Left ventricle myocardium inferior (tissue), 1 donor: ENCODE measurements at regions of chr1 and their contacts with region 1.

Region 1: GRCh38 chr1:64268653-64269557 is 65.5 kb downstream of the UBE2U start:
- DNase-seq: peak; percentile 31
- H3K4me3 ChIP-seq: no peak overlapping the region
- H3K27ac ChIP-seq: no peak overlapping the region
- H3K4me1 ChIP-seq: no peaks in the 10 kb centered on the region
- H3K27me3 ChIP-seq: peaks cover 4% of the 10 kb centered on the region
- CTCF ChIP-seq: peak; percentile 83

Region 2: DNA sequence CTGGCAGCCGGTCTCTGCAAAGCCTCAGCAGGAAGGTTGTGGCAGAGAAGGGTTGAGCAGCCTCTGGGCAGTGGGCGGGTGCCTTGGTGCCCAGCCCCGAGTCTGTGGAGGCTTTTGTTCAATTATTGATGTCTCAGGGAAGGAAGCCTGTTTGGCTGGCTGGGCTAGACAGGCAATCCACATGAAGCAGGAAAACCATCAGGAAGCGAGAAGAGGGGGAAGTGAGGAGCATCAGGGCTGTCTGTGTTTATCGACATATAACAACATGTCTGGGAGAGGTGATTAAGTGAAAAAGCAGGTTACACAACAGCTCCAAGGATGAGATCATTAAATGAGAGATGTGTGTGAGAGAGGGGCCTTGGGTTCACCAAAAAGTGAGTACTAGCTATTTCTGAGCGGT is 40.0 kb after region 1 on chr1:
- intact Hi-C with region 1: no loop called
- DNase-seq: no peak
- H3K4me3 ChIP-seq: no peak overlapping the region
- H3K27ac ChIP-seq: no peak overlapping the region
- H3K4me1 ChIP-seq: no peaks in the 10 kb centered on the region
- H3K27me3 ChIP-seq: no peaks in the 10 kb centered on the region
- CTCF ChIP-seq: no peak

Region 3: GRCh38 chr1:64487061-64487460 is 218.2 kb after region 1 on chr1:
- intact Hi-C with region 1: loop called (anchors 10 kb)
- DNase-seq: no peak
- H3K4me3 ChIP-seq: no peak overlapping the region
- H3K27ac ChIP-seq: no peak overlapping the region
- H3K4me1 ChIP-seq: peaks cover 11% of the 10 kb centered on the region
- H3K27me3 ChIP-seq: no peaks in the 10 kb centered on the region
- CTCF ChIP-seq: peak; percentile 48

Region 4: DNA sequence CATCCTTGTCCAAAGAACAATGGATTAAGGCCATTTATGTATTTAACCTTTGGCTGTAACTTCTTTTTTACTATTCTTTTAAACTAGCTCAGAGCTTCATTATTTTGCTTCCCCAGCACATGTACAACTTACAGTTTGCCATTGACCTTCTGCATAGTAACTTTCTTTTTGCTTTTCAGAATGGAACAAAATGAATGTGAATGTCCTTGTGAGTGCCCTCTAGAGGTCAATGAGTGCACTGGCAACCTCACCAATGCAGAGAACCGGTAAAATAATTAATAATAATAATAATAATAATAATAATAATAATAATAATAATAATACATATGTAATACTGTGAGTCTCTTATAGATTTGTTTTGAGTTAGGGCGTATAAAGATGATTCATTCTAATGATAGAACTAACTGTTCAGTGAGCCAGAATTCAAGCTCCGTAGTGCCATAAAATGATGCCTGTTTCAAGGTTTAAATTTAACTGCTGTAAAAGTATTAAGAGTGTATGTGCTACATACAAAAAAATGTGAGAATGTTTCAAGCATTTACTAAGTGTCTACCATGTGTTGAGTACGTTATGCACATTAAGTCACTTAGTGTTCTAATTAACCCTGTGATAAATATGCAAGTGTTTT is 406.9 kb after region 1 on chr1:
- intact Hi-C with region 1: loop called (anchors 10 kb)
- DNase-seq: no peak
- H3K4me3 ChIP-seq: no peak overlapping the region
- H3K27ac ChIP-seq: no peak overlapping the region
- H3K4me1 ChIP-seq: no peaks in the 10 kb centered on the region
- H3K27me3 ChIP-seq: no peaks in the 10 kb centered on the region
- CTCF ChIP-seq: peak; percentile 79